HCT116 (cell line): ENCODE measurements at regions of chr18 and their contacts with region 1.

Region 1: GRCh38 chr18:58128381-58129374 is 84.7 kb downstream of the NEDD4L start:
- DNase-seq: no peak
- ATAC-seq: no peak
- H3K4me3 ChIP-seq: no peak overlapping the region
- H3K27ac ChIP-seq: no peak overlapping the region
- H3K4me1 ChIP-seq: no peaks in the 10 kb centered on the region
- H3K27me3 ChIP-seq: no peaks in the 10 kb centered on the region
- CTCF ChIP-seq: no peak
- POLR2A ChIP-seq: no peak
- RAD21 ChIP-seq: no peak

Region 2: DNA sequence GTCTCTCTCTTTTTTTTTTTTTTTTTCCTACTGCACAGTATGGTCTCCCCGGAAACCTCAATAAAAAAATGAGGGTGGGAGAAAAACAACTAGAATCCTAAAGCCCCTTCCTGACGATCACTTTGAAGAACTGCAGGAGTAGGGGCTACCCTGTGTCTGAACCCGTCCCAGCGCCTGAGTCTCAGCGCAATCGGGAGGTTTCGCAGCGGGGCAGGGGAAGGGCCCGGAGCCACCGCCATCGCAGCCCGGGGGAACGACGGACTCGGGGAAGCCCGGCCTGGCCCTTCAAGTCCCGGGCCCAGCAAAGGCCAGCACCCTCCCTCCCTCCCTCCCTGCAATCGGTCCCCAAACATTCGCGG is 507.5 kb before region 1 on chr18:
- CTCF ChIA-PET with region 1: no interaction called
- POLR2A ChIA-PET with region 1: no interaction called
- RAD21 ChIA-PET with region 1: no interaction called
- intact Hi-C with region 1: loop called (anchors 10 kb)
- DNase-seq: no peak
- ATAC-seq: peak; percentile 31
- H3K4me3 ChIP-seq: peak overlapping the region; percentile 76 to 80
- H3K27ac ChIP-seq: peak overlapping the region; percentile 67
- H3K4me1 ChIP-seq: peaks cover 5 to 23% of the 10 kb centered on the region in 2 experiments
- H3K27me3 ChIP-seq: no peaks in the 10 kb centered on the region
- CTCF ChIP-seq: no peak
- POLR2A ChIP-seq: no peak
- RAD21 ChIP-seq: no peak